Left cardiac atrium (tissue), 4 donors: ENCODE measurements at regions of chr5 and their contacts with region 1.

Region 1: GRCh38 chr5:157476702-157477408 is 16.8 kb downstream of the NIPAL4 start:
- DNase-seq: no peak
- ATAC-seq: peak; percentile 42 to 69

Region 2: DNA sequence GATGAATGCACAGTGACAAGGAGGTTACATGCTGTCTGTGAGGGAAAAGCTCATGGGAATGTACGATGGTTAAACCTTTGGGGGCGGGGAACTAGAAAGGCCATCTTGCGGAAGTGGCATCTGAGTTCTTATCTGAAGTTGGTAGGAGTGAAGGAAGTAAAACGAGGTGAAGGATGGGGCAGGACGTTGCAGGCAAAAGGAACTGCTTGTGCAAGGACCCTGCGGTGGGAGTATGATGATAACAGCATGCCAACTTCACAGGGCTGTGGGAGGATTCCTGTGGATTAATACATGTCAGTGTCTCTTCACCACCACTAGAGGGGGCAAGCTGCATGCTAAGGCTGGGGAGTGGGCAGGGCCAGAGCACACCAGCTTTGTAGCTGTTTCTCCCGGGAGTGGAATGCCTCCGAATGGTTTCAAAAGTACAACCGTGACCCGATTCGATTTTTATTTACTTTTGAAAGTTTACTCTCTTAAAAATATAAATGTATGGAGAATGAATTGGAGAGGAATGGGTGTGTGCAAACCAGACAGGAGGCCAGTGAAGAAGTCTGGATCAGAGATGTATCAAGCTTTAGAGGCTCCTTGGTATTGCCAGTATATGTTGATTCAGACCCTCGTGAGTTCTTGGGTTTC is 148.5 kb before region 1 on chr5:
- intact Hi-C with region 1: loop called in 1 of 2 experiments (anchors 5 kb)
- DNase-seq: peak; percentile 62
- ATAC-seq: peak; percentile 98 to 99

Region 3: DNA sequence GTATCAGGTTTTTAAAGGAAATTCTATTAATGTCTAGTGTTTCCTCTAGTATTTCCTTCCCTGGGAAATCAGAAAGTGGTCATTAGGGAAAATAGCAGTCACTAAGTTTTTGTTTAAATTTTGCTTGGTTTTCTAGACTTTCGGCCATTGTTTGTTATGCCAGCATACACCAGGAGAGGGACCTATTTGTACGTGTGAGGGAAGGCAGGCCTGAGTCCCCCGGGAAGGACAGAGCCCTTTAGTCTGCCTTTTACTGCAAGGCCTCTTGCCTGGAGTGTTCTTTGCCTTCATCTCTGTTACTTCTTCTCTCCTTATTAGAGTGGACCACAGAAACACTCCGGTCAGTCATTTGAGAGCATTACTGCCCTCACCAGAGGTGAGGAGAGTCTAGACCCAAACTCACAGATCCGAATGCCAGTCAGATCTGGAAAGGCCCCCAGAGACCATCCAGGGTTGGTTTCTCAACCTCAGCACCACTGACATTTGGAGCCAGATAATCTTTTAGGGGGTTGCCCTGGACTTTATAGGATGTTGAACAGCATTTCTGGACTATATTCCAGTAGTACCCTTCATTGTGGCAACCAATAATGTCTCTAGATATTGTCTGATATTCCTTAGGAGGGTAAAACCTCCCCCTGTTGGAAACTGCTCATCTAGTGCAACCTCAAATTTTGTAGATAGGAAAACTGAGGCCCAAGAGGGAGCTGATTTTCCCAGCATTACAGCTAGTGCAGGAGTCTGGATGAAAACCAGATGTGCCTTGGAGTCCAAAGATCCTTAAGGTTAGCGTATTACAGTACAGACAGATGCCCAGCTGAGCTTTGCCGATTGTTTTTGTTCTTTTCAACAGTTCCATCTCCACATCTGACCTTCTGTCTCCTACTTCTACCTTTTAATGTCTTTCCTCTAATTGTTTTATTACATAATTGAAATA is 109.8 kb before region 1 on chr5:
- intact Hi-C with region 1: loop called (anchors 5 kb)
- DNase-seq: no peak
- ATAC-seq: peak; percentile 66 to 84